ENCODE measurements at regions of chr17 and their contacts with region 1.

Region 1: DNA sequence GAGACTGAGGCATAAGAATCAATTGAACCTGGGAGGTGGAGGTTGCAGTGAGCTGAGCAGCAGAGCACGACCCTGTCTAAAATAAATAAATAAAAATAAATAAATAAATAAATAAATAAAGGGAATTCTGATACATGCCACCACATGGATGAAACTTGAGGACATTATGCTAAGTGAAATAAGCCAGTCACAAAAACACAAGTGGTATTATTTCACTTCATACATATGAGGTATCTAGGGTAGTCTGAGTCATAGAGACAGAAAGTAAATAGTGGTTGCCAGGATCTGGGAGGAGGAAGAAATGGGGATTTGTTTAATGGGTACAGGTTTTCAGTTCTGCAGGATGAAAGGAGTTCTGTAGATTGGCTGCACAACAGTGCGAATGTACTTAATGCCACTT is 16.3 kb downstream of the PIPOX start:
- DNase-seq: peak; percentile 51
- H3K4me3 ChIP-seq: no peak overlapping the region
- H3K27ac ChIP-seq: no peak overlapping the region
- H3K4me1 ChIP-seq: no peaks in the 10 kb centered on the region
- H3K27me3 ChIP-seq: no peaks in the 10 kb centered on the region
- CTCF ChIP-seq: no peak

Region 2: DNA sequence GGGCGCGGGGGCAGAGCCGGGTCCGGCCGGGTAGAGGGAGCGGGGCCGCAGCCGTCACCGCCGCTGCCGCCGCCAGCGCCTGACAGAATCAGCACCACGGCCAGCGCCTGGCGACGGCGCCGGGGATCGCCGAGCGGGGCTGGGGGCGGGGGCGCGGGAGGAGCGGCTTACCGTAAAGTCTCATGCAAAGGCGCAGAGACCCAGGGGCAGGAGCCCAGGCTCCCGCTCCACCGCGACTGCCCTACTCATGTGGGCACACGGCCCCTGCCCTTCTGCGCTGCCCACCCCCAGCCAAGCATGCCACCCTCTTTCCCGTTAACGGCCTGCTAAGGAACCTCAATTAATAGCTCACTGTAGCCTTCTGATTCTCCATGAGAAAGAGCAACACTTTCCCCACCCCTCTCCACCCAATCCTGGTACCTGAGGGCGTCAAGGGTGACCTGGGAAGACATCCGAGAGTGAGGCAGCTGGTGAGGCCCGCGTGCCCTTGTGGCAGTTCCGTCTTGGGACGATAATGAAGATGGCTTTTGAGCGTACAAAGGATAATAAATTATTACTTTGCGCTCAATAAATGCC is 53.3 kb before region 1 on chr17 and contains the start of gene SEZ6:
- CTCF ChIA-PET with region 1: no interaction called
- dilution Hi-C with region 1: no loop called
- in situ Hi-C with region 1: no loop called
- intact Hi-C with region 1: loop called (anchors 10 kb)
- DNase-seq: peak; percentile 47
- H3K4me3 ChIP-seq: no peak within 1 kb of the TSS
- H3K27ac ChIP-seq: no peak within 1 kb of the TSS
- H3K4me1 ChIP-seq: no peaks in the 10 kb centered on the region
- H3K27me3 ChIP-seq: peaks cover 13% of the 10 kb centered on the region
- CTCF ChIP-seq: no peak
- total RNA-seq, gene SEZ6: not detected

Region 3: DNA sequence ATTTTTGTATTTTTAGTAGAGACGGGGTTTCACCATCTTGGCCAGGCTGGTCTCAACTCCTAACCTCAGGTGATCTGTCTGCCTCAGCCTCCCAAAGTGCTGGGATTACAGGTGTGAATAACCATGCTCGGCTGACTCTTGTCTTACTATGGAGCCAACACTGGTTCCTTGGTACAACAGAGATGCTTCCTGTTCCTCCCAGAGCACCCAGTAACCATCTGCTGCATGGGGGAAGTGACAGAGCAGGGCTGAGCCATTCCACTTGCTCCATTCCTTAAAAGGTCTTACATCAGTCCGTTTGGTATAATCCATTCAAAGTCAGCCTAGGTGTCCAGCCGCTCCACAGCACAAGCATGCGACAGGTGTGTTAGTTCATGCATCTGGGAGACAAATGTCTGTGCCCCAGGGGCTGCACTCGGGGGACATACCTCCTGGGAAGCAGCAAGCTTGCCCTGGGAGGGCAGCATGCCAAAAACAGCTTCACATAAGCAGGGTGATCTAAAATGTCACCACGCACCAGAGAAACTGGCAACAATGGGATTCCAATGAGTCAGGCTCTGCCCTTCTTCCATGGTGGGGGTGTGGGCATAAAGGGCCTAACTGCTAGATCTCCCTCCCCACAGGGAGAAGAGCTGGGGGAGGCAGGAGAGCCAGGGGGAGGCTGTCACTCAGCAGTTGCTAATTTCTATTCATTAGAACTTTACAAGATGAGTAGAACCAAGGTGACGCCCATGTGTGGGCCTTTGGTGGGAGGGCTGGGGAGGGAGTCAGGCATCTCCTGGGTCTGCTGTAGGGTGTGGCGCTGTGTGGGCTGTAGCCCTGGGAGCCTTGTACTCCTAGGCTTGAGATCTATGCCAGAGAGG is 19.1 kb after region 1 on chr17:
- CTCF ChIA-PET with region 1: no interaction called
- dilution Hi-C with region 1: no loop called
- in situ Hi-C with region 1: no loop called
- intact Hi-C with region 1: no loop called
- DNase-seq: no peak
- H3K4me3 ChIP-seq: no peak overlapping the region
- H3K27ac ChIP-seq: no peak overlapping the region
- H3K4me1 ChIP-seq: no peaks in the 10 kb centered on the region
- H3K27me3 ChIP-seq: no peaks in the 10 kb centered on the region
- CTCF ChIP-seq: no peak